HEK293T (cell line): ENCODE measurements at regions of chr5 and their contacts with region 1.

Region 1: DNA sequence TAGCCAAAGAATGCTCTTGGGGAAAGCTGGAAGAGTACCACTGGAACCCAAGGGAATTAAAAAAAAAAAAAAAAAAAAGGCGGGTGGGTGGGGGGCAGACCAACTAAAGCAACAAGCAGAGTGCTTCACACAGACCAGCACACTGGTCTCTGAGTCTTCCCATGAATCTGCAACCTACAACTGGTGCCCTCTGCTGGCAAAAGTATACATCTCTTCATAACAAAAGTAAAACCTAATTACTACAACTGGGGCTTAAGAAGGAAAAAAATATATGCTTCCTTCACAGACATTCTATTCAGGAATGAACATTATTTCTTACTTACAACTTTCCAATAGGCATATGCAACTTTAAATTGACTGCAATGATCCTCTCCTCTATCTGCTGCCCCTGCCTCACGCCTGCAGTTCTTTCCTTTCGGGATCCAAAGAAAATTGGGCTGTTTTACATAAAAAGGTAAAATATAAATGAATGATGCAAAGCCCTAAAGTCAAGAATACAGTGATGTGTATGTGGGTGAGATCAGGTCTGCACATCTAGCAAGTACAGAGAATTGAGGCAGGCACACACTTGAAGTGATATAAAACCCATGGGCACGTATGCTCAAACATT is 7.2 kb upstream of the KLHL3 start:
- DNase-seq: peak; percentile 56

Region 2: GRCh38 chr5:137629646-137630045 is 113.5 kb before region 1 on chr5:
- CTCF ChIA-PET with region 1: interaction called, 38 read pairs
- POLR2A ChIA-PET with region 1: no interaction called
- DNase-seq: peak; percentile 72

Region 3: DNA sequence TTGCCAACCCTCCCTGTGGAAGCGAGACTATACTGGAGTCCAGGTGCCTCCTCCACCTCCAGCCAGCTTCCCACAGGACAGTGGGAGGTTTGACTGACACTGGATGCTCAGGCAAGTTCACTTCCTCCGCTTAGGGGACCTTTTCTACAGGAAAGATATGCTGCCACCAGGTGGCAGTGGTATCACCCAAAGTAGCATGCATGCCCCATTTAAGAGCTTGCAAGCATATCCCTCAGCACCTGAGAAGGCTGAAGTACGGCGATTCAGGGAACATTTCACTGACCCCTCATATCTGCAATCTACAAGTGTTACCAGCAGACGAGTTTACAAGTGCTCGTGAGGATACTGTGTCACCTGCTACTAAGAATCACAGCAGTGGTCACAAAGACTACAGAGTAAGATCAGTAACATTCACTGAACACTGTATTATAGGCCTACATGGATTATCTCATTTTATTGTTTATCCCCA is 82.8 kb before region 1 on chr5:
- CTCF ChIA-PET with region 1: interaction called, 32 read pairs
- POLR2A ChIA-PET with region 1: no interaction called
- DNase-seq: peak; percentile 70

Region 4: DNA sequence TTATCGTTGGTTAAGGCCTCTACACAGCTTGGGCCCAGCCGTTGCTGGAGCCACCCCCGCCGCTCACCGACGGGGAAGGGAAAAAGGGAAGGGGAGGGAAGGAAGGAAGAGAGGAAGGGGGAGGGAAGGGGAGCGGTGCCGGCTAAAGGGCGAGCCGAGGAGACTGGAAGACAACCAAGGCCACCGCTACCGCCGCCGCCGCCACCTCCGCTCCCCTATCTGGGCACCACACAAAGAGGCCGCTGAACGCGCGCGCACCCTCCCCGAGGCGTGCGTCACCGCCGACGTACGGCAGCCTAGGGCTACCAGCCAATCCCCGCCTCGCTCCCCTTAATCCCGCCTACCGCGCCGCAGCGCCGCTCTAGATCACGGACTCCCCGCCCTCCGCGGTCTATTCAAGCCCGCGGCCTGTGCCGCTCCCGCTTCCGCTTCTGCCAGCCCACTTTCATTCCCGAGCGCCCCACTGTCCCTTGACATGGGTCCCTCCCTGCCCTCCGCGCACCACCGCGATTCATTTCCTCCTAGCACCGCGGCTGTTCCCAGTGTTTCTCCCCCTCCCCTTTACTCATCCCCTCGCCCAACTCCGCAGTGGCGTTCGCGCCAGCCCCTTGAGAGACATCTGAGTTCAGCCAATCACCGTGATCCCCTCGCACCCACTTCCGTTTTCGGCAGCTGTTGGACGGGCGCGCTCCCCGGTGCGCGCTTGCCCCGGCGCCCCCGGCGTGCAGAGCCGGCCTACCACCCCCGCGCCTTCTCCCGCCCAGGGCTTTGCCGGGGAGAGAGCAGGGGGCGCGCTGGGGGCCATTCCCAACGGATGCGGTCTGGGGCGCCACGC is 11.2 kb after region 1 on chr5 and contains the start of gene HNRNPA0:
- CTCF ChIA-PET with region 1: interaction called, 10 read pairs
- POLR2A ChIA-PET with region 1: interaction called, 9 read pairs
- DNase-seq: peak; percentile 94

Region 5: GRCh38 chr5:137794863-137795262 is 51.7 kb after region 1 on chr5:
- CTCF ChIA-PET with region 1: no interaction called
- POLR2A ChIA-PET with region 1: no interaction called
- DNase-seq: no peak